Activated CD4-positive, alpha-beta T cell treated with anti-CD3 and anti-CD28 coated beads for 36 hours (primary cell): ENCODE measurements at regions of chr15 and their contacts with region 1.

Region 1: GRCh38 chr15:67433495-67434099 is 87.3 kb upstream of the C15orf61 start:
- DNase-seq: peak; percentile 58
- ATAC-seq: peak; percentile 63
- H3K4me3 Mint-ChIP-seq: no peak overlapping the region
- H3K27ac Mint-ChIP-seq: no peak overlapping the region
- H3K4me1 Mint-ChIP-seq: no peaks in the 10 kb centered on the region
- H3K27me3 Mint-ChIP-seq: no peaks in the 10 kb centered on the region

Region 2: GRCh38 chr15:66946578-66947164 is 486.9 kb before region 1 on chr15:
- CTCF ChIA-PET with region 1: interaction called, 6 read pairs
- POLR2A ChIA-PET with region 1: no interaction called
- intact Hi-C with region 1: loop called (anchors 1 to 5 kb)
- DNase-seq: peak; percentile 85
- ATAC-seq: peak; percentile 70
- H3K4me3 Mint-ChIP-seq: no peak overlapping the region
- H3K27ac Mint-ChIP-seq: no peak overlapping the region
- H3K4me1 Mint-ChIP-seq: peaks cover 3% of the 10 kb centered on the region
- H3K27me3 Mint-ChIP-seq: no peaks in the 10 kb centered on the region

Region 3: DNA sequence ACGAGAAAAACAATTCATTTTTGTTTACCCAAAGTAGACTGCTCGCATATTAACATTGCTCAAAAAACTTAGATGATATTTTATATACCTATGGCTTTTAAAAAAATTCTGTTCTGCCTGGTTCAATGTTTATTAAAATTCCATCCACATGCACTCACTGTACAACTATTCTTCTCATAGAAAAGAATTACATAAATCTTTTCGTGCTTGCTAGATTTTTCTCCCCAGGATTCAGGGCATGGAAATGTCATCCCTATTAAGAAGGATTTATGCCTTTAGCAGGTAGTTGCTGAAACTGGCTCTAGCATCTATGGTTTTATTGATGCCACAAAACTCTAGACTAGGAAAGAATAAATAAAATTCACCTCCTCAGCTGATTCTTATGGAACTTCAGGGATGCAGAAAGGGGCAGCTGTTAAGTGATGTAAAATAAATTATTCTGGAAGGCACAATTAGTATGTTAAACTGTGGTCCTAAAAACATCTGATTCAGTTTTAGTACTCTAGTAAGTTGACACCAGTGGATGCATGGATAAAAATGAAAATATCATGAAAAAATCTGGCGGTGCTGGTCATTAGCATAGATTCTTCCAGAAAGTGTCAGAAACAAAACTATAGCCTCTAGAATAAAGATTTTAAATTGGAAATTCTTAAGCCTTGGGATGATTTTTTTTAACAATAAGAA is 220.8 kb before region 1 on chr15:
- CTCF ChIA-PET with region 1: no interaction called
- POLR2A ChIA-PET with region 1: no interaction called
- intact Hi-C with region 1: loop called in 1 of 2 experiments (anchors 10 kb)
- DNase-seq: no peak
- ATAC-seq: no peak
- H3K4me3 Mint-ChIP-seq: no peak overlapping the region
- H3K27ac Mint-ChIP-seq: no peak overlapping the region
- H3K4me1 Mint-ChIP-seq: peaks cover 2% of the 10 kb centered on the region
- H3K27me3 Mint-ChIP-seq: no peaks in the 10 kb centered on the region